Activated CD8-positive, alpha-beta T cell treated with anti-CD3 and anti-CD28 coated beads, Interleukin-2, amount 10 ng/mL, durations not matched to agents 7 days and 5 days (primary cell): ENCODE measurements at regions of chr11 and their contacts with region 1.

Region 1: GRCh38 chr11:30128269-30128932 is 102.4 kb upstream of the FSHB start:
- DNase-seq: peak; percentile 22
- ATAC-seq: no peak
- H3K4me3 Mint-ChIP-seq: no peak overlapping the region
- H3K27ac Mint-ChIP-seq: no peak overlapping the region
- H3K4me1 Mint-ChIP-seq: no peaks in the 10 kb centered on the region
- H3K27me3 Mint-ChIP-seq: no peaks in the 10 kb centered on the region

Region 2: DNA sequence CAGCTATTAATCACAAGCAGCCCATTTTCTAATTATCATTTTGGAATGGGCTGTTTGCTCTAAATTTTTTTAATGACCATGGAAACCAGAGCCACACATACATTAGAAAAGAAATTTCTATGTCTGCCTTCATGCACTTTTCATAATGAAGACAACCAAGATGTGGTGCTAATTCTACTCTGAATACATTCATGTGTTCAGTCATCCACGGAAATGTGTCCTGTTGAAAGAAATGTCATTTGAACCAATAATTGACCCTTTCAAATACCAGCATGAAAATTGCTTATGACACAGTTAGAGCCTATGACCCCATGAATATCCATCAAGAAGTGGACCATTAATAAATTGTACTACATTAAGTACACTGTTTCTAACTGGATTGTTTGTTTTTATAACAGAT is 11.9 kb before region 1 on chr11:
- CTCF ChIA-PET with region 1: interaction called, 20 read pairs
- POLR2A ChIA-PET with region 1: no interaction called
- DNase-seq: no peak
- ATAC-seq: no peak
- H3K4me3 Mint-ChIP-seq: no peak overlapping the region
- H3K27ac Mint-ChIP-seq: no peak overlapping the region
- H3K4me1 Mint-ChIP-seq: no peaks in the 10 kb centered on the region
- H3K27me3 Mint-ChIP-seq: no peaks in the 10 kb centered on the region

Region 3: GRCh38 chr11:30143098-30143705 is 14.8 kb after region 1 on chr11:
- CTCF ChIA-PET with region 1: interaction called, 69 read pairs
- POLR2A ChIA-PET with region 1: no interaction called
- DNase-seq: peak; percentile 21
- ATAC-seq: no peak
- H3K4me3 Mint-ChIP-seq: no peak overlapping the region
- H3K27ac Mint-ChIP-seq: no peak overlapping the region
- H3K4me1 Mint-ChIP-seq: no peaks in the 10 kb centered on the region
- H3K27me3 Mint-ChIP-seq: peaks cover 4% of the 10 kb centered on the region

Region 4: DNA sequence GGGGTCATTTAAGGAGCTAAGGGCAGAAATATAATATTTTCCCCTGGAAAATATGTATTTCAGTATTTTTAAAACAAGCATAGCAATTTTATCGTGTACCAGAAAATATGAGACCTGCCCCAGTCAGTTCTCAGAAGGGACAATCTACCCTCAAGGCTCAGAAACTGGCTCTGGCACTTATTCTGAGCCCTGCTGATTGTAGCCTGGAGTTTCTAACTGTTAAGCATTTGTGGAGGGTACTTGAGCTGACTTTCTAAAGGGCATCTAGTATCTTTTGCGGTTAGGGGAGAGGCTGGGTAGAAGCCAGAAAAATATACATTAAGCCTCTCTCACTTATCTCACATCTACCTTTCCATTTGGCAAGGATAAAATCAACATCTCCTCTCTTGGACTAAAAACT is 31.1 kb after region 1 on chr11:
- CTCF ChIA-PET with region 1: no interaction called
- POLR2A ChIA-PET with region 1: no interaction called
- DNase-seq: no peak
- ATAC-seq: no peak
- H3K4me3 Mint-ChIP-seq: no peak overlapping the region
- H3K27ac Mint-ChIP-seq: no peak overlapping the region
- H3K4me1 Mint-ChIP-seq: no peaks in the 10 kb centered on the region
- H3K27me3 Mint-ChIP-seq: no peaks in the 10 kb centered on the region

Region 5: GRCh38 chr11:30304620-30305019 is 176.2 kb after region 1 on chr11:
- CTCF ChIA-PET with region 1: no interaction called
- POLR2A ChIA-PET with region 1: no interaction called
- DNase-seq: no peak
- ATAC-seq: no peak
- H3K4me3 Mint-ChIP-seq: no peak overlapping the region
- H3K27ac Mint-ChIP-seq: no peak overlapping the region
- H3K4me1 Mint-ChIP-seq: no peaks in the 10 kb centered on the region
- H3K27me3 Mint-ChIP-seq: peaks cover 31% of the 10 kb centered on the region

Region 6: DNA sequence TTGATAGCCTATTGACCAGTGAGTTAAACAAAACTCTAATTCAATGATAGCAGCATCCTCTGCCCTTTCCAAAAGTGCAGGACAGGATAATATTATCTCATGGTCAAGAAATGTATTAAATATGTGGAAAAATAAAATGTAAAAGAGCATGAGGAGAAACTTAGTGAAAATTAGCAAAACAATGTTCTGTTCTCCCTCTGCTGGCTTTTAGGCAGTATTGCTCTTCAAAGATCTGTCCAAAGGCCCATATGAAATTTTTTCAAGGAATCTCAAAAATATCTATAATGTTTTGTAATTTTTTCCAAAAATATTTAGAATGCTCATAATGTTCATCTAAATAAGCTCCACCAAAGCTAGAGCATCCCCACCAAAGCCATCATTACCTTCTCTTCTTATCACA is 186.2 kb after region 1 on chr11:
- CTCF ChIA-PET with region 1: interaction called, 25 read pairs
- POLR2A ChIA-PET with region 1: no interaction called
- DNase-seq: no peak
- ATAC-seq: no peak
- H3K4me3 Mint-ChIP-seq: no peak overlapping the region
- H3K27ac Mint-ChIP-seq: no peak overlapping the region
- H3K4me1 Mint-ChIP-seq: peaks cover 19% of the 10 kb centered on the region
- H3K27me3 Mint-ChIP-seq: peaks cover 8% of the 10 kb centered on the region